WTC11 (cell line): ENCODE measurements at regions of chr3 and their contacts with region 1.

Region 1: DNA sequence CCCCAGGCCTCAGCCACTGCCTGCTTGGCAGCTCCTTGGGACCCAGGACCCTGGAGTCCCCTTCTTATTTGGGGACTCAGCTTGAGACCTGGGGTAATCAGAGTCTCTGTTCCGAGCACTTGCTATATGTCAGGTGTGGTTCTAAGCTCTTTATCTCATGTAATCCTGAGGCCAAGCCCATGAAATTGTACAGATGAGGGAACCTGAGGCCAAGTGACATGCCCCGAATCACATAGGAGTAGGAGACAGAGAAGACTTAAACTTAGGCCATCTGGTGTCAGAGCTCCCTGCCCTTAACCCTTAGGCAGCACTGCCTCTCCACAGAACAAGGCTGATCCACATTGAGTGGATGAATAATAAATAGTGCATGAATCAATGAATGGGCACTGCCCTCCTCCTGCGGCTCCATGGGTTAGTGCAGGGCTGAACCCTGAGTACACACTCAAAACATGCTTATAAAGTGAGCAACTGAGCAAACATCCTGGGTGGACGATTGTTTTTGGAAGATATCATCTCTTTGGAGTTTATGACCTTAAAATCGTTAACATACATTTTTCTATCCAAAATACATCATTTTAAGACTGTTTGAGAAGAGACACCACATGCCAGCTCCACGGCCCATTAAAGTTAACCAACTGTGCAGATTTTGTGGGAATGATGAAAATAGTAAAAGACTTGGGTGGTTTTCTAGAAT is 33.2 kb upstream of the IQSEC1 start:
- DNase-seq: no peak
- ATAC-seq: no peak
- H3K4me3 Mint-ChIP-seq: no peak overlapping the region
- H3K27ac Mint-ChIP-seq: no peak overlapping the region
- H3K4me1 Mint-ChIP-seq: 0 out of 2 replicates have a peak, but pooled peaks cover 6% of the 10 kb centered on the region
- H3K27me3 Mint-ChIP-seq: no peaks in the 10 kb centered on the region
- CTCF ChIP-seq: no peak

Region 2: GRCh38 chr3:12541631-12542030 is 564.8 kb before region 1 on chr3:
- CTCF ChIA-PET with region 1: no interaction called
- POLR2A ChIA-PET with region 1: interaction called, 11 read pairs
- DNase-seq: peak; percentile 56
- ATAC-seq: peak; percentile 68
- H3K4me3 Mint-ChIP-seq: no peak overlapping the region
- H3K27ac Mint-ChIP-seq: no peak overlapping the region
- H3K4me1 Mint-ChIP-seq: peaks cover 22% of the 10 kb centered on the region
- H3K27me3 Mint-ChIP-seq: no peaks in the 10 kb centered on the region
- CTCF ChIP-seq: peak; percentile 30; the same call in 1 of the 2 replicates

Region 3: DNA sequence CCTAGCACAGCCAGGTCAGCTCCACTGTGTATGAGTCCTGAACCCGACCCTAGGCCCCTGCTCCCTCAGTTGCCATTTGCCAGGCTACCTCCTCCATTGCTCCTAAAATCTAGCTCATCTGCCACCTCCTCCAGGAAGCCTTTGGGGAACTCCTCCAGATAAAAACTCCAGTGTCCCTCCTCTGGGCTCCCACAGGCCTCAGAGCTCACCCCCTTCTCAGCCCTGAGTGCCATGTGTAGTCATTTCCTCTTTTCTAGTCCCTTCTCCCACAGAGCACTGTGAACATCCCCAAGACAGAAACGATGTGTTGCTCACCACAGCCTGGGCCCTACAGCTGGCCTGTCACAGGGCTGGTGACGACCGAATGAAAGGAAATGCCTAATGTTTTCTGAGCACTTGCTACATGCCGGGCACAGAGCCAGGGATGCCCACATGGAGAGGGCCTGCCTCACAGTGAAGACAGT is 94.2 kb before region 1 on chr3:
- CTCF ChIA-PET with region 1: no interaction called
- POLR2A ChIA-PET with region 1: no interaction called
- DNase-seq: no peak
- ATAC-seq: no peak
- H3K4me3 Mint-ChIP-seq: no peak overlapping the region
- H3K27ac Mint-ChIP-seq: no peak overlapping the region; the same call in 1 of the 2 replicates
- H3K4me1 Mint-ChIP-seq: peaks cover 29% of the 10 kb centered on the region
- H3K27me3 Mint-ChIP-seq: no peaks in the 10 kb centered on the region
- CTCF ChIP-seq: no peak

Region 4: GRCh38 chr3:13173186-13173585 is 66.7 kb after region 1 on chr3:
- CTCF ChIA-PET with region 1: no interaction called
- POLR2A ChIA-PET with region 1: no interaction called
- DNase-seq: no peak
- ATAC-seq: no peak
- H3K4me3 Mint-ChIP-seq: no peak overlapping the region
- H3K27ac Mint-ChIP-seq: no peak overlapping the region
- H3K4me1 Mint-ChIP-seq: peaks cover 23% of the 10 kb centered on the region
- H3K27me3 Mint-ChIP-seq: peaks cover 8% of the 10 kb centered on the region; the same call in 1 of the 2 replicates
- CTCF ChIP-seq: no peak

Region 5: GRCh38 chr3:13470894-13471574 is 364.6 kb after region 1 on chr3:
- CTCF ChIA-PET with region 1: no interaction called
- POLR2A ChIA-PET with region 1: no interaction called
- DNase-seq: peak; percentile 4
- ATAC-seq: no peak
- H3K4me3 Mint-ChIP-seq: no peak overlapping the region
- H3K27ac Mint-ChIP-seq: no peak overlapping the region
- H3K4me1 Mint-ChIP-seq: peaks cover 31% of the 10 kb centered on the region
- H3K27me3 Mint-ChIP-seq: peaks cover 63% of the 10 kb centered on the region
- CTCF ChIP-seq: no peak